Caco-2 (cell line): ENCODE measurements at regions of chr21 and their contacts with region 1.

Region 1: DNA sequence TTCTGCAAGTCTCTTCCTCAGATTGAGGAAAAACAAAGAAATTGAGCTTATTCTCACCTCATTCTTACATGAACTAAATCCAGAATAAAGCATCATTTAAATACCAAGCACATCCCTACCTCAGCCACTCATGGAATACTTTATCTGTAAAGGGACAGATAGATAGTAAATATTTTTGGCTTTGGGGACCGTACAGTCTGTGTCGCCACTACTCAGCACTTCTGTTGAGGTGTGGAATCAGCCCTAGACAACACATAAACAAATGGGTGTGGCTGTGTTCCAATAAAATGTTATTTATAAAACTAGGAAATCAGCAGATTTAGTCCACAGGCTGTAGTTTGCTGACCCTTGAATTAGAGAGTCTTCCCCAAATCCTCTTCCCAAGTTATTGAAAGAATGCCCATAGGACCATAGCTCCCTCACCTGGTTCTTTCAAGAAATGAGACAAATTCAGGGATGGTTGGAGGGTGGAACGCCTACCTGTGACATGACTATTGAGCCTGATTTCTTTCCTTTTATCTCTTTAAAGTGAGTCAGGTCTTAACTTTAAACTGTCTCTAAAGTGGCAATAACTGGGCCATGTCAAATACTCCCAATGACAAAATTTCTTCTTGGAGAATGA is 878.5 kb downstream of the USP25 start:
- DNase-seq: peak in 1 of 2 experiments; percentile 7
- H3K4me3 ChIP-seq: no peak overlapping the region
- H3K4me3 Mint-ChIP-seq: no peak overlapping the region
- H3K27ac Mint-ChIP-seq: no peak overlapping the region
- H3K4me1 ChIP-seq: no peaks in the 10 kb centered on the region
- H3K4me1 Mint-ChIP-seq: no peaks in the 10 kb centered on the region
- H3K27me3 ChIP-seq: no peaks in the 10 kb centered on the region
- H3K27me3 Mint-ChIP-seq: peaks cover 3% of the 10 kb centered on the region
- CTCF ChIP-seq: peak; percentile 26 to 49

Region 2: DNA sequence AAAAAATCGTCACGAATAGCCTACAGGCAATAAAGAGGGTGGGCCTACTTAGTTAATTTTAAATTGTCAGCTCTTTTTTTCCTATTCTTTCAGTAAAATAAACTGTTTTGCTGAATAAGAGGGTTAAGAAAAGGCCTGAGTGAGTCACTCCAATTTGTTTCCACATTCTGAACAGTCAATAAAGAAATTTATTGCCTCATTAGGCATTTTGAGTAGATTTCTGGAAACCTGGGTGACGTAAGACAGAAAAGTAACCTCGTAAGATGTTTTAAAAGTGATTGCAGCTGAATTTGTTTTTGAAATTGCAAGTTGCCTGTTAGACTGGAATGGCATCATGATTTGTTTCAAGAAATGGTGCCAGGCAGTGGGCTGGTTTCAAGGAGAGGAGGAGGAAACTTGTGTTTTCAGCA is 439.2 kb before region 1 on chr21:
- CTCF ChIA-PET with region 1: no interaction called
- POLR2A ChIA-PET with region 1: no interaction called
- intact Hi-C with region 1: no loop called
- DNase-seq: no peak
- H3K4me3 ChIP-seq: no peak overlapping the region
- H3K4me3 Mint-ChIP-seq: no peak overlapping the region
- H3K27ac Mint-ChIP-seq: no peak overlapping the region
- H3K4me1 ChIP-seq: no peaks in the 10 kb centered on the region
- H3K4me1 Mint-ChIP-seq: no peaks in the 10 kb centered on the region
- H3K27me3 ChIP-seq: no peaks in the 10 kb centered on the region
- H3K27me3 Mint-ChIP-seq: no peaks in the 10 kb centered on the region
- CTCF ChIP-seq: no peak

Region 3: GRCh38 chr21:16454399-16454798 is 153.9 kb before region 1 on chr21:
- CTCF ChIA-PET with region 1: no interaction called
- POLR2A ChIA-PET with region 1: no interaction called
- intact Hi-C with region 1: loop called (anchors 1 kb)
- DNase-seq: no peak
- H3K4me3 ChIP-seq: no peak overlapping the region
- H3K4me3 Mint-ChIP-seq: no peak overlapping the region
- H3K27ac Mint-ChIP-seq: no peak overlapping the region
- H3K4me1 ChIP-seq: no peaks in the 10 kb centered on the region
- H3K4me1 Mint-ChIP-seq: no peaks in the 10 kb centered on the region
- H3K27me3 ChIP-seq: no peaks in the 10 kb centered on the region
- H3K27me3 Mint-ChIP-seq: peaks cover 3% of the 10 kb centered on the region
- CTCF ChIP-seq: peak in 1 of 2 experiments; percentile 13

Region 4: DNA sequence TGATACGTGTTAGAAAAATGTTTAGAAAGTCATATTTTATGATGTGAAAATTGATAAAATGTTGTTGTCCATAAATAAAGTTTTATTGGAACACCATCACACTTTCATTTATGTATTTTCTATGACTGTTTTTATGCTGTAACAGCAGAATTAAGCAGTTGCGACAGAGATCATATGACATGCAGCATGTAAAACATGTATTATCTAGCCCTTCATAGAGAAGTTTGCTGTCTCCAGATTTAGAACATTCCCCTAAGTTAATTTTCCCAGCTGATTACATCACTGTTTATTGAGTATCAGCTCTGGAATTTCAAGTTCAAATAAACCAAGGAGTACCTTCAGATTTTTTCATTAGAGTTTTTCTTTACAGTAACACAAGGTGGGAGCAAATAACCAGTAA is 85.8 kb before region 1 on chr21:
- CTCF ChIA-PET with region 1: no interaction called
- POLR2A ChIA-PET with region 1: no interaction called
- intact Hi-C with region 1: loop called (anchors 2 kb)
- DNase-seq: no peak
- H3K4me3 ChIP-seq: no peak overlapping the region
- H3K4me3 Mint-ChIP-seq: no peak overlapping the region
- H3K27ac Mint-ChIP-seq: no peak overlapping the region
- H3K4me1 ChIP-seq: no peaks in the 10 kb centered on the region
- H3K4me1 Mint-ChIP-seq: no peaks in the 10 kb centered on the region
- H3K27me3 ChIP-seq: no peaks in the 10 kb centered on the region
- H3K27me3 Mint-ChIP-seq: no peaks in the 10 kb centered on the region
- CTCF ChIP-seq: no peak

Region 5: GRCh38 chr21:16624479-16625118 is 16.3 kb after region 1 on chr21:
- CTCF ChIA-PET with region 1: no interaction called
- POLR2A ChIA-PET with region 1: no interaction called
- intact Hi-C with region 1: no loop called
- DNase-seq: no peak
- H3K4me3 ChIP-seq: no peak overlapping the region
- H3K4me3 Mint-ChIP-seq: no peak overlapping the region
- H3K27ac Mint-ChIP-seq: no peak overlapping the region
- H3K4me1 ChIP-seq: no peaks in the 10 kb centered on the region
- H3K4me1 Mint-ChIP-seq: no peaks in the 10 kb centered on the region
- H3K27me3 ChIP-seq: no peaks in the 10 kb centered on the region; the same call in 1 of the 2 replicates
- H3K27me3 Mint-ChIP-seq: no peaks in the 10 kb centered on the region
- CTCF ChIP-seq: no peak